PC-3 (cell line): ENCODE measurements at regions of chr11 and their contacts with region 1.

Region 1: GRCh38 chr11:11036848-11037732 is 179.2 kb upstream of the ZBED5 start:
- DNase-seq: peak; percentile 66
- ATAC-seq: peak; percentile 84
- H3K4me3 ChIP-seq: no peak overlapping the region
- H3K27ac ChIP-seq: no peak overlapping the region
- H3K4me1 ChIP-seq: no peaks in the 10 kb centered on the region
- H3K27me3 ChIP-seq: 0 out of 2 replicates have a peak, but pooled peaks cover 2% of the 10 kb centered on the region
- CTCF ChIP-seq: peak; percentile 81

Region 2: GRCh38 chr11:10955616-10956015 is 81.5 kb before region 1 on chr11:
- CTCF ChIA-PET with region 1: no interaction called
- POLR2A ChIA-PET with region 1: interaction called, 11 read pairs
- intact Hi-C with region 1: no loop called
- DNase-seq: no peak
- ATAC-seq: no peak
- H3K4me3 ChIP-seq: no peak overlapping the region
- H3K27ac ChIP-seq: no peak overlapping the region
- H3K4me1 ChIP-seq: no peaks in the 10 kb centered on the region
- H3K27me3 ChIP-seq: no peaks in the 10 kb centered on the region
- CTCF ChIP-seq: no peak

Region 3: DNA sequence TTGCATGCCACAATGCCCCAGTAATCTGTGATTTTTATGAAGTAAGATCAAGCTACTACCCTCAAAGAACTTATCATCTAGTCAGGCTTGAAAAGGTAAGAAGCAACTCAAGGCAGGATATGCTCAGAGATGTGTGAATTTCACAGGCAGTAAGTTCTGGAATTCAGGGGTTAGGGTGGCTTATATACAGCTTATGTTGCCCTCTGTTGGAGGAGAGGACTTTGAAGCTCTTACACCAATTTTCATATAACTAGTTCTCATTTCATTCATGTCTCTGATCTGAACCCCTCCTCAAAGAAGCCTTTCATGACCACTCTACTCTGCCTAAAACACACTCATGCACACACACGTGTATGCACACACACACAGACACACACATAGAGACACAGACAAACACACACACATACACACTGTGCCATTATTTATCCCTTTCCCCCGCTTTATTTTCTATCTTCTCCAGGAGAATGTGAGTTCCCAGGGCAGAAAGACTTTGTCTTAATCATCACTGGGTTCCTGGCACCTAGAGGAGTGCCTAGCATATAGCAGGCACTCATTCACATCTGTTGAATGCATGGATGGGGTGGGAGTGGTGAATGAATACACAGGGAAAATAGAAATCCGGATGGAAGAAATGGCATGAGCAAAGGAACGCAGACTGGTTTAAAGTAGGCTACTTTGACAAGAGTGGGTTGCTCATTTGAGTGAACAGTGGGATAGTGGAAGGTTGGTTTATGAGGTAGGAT is 41.4 kb after region 1 on chr11:
- CTCF ChIA-PET with region 1: no interaction called
- POLR2A ChIA-PET with region 1: interaction called, 11 read pairs
- intact Hi-C with region 1: no loop called
- DNase-seq: peak; percentile 23
- ATAC-seq: peak; percentile 51
- H3K4me3 ChIP-seq: no peak overlapping the region
- H3K27ac ChIP-seq: no peak overlapping the region
- H3K4me1 ChIP-seq: no peaks in the 10 kb centered on the region
- H3K27me3 ChIP-seq: peaks cover 29% of the 10 kb centered on the region
- CTCF ChIP-seq: peak; percentile 45; the same call in 1 of the 2 replicates

Region 4: DNA sequence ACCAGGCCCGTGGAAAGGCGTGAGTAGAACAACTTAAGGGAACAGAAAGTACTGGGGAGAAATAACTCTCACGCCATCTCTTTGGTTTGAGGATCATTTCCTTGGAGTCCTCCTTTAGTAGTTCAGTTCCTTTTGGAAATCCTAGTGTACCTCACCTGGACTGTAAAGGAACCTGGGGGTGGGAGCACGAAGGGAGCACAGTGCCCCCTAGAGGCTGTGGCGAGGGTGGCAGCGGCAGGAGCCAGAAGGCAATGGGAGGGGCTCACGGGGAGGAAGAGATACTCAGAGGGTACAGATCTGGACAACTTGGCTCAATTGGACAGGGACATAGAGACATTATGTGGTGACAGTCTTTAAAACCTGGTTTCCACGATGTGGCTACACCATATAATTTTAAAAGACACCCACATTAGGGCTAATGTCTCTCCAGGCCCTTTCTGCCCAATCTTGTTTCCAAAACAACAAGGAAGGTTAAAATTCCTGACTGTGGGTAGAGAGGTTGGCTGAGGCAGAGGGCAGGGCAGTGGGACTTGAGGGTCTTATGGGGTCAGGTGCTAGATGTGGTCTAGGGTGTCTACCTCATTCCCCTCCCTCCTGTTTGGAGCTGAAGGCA is 229.0 kb after region 1 on chr11:
- CTCF ChIA-PET with region 1: no interaction called
- POLR2A ChIA-PET with region 1: no interaction called
- intact Hi-C with region 1: loop called (anchors 5 kb)
- DNase-seq: peak; percentile 70
- ATAC-seq: peak; percentile 55
- H3K4me3 ChIP-seq: no peak overlapping the region
- H3K27ac ChIP-seq: peak overlapping the region; percentile 72
- H3K4me1 ChIP-seq: peaks cover 38% of the 10 kb centered on the region
- H3K27me3 ChIP-seq: no peaks in the 10 kb centered on the region
- CTCF ChIP-seq: peak; percentile 90

Region 5: GRCh38 chr11:11621573-11622319 is 584.7 kb after region 1 on chr11 and contains the start of gene GALNT18:
- CTCF ChIA-PET with region 1: no interaction called
- POLR2A ChIA-PET with region 1: no interaction called
- intact Hi-C with region 1: loop called (anchors 10 kb)
- DNase-seq: peak; percentile 92
- ATAC-seq: peak; percentile 82
- H3K4me3 ChIP-seq: peak within 1 kb of the TSS; percentile 96
- H3K27ac ChIP-seq: no peak within 1 kb of the TSS
- H3K4me1 ChIP-seq: peaks cover 23% of the 10 kb centered on the region
- H3K27me3 ChIP-seq: no peaks in the 10 kb centered on the region
- CTCF ChIP-seq: peak; percentile 40; the same call in 1 of the 2 replicates
- total RNA-seq, gene GALNT18: 34.5 and 41.1 TPM in 2 replicates